ENCODE measurements at regions of chr19 and their contacts with region 1.

Region 1: DNA sequence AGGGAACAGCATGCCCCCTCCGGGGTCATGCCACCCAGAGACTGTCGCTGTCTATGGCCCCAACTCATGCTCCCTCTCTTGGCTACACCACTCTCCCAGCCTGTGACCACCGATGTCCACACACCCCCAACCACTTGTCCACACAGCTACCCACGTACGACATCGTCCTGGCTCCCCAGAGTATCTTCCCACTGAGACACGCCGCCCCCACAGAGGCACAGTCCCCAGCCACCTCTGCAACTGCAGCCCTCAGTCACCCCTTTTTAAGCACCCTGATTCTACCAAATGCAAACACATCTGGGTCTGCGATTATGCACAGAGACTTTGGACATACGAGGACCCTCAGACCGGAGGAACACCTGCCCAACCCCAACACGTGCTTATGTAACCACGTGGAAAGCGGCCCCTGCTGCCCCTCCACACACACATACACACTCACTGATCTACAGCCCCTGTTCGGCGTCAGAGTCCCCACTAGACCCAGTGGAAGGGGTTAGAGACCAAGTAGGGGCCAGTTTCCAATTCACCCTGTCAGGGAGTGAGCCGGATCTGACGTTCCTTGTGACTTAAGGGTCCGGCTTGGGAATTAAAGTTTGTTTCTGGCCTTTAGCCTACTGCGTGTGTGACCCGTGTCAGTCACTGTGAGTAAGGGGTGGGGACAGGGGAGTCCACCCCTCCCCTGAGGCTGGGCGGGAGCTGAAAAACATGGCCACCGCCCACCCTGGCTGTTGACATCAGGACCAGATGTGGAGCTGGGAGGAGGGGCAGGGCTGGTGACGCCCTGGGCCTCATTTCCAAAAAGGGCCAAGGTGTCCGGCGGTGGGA is 11.9 kb upstream of the AXL start:
- DNase-seq: no peak
- ATAC-seq: no peak
- H3K4me3 ChIP-seq: no peak overlapping the region
- H3K27ac ChIP-seq: no peak overlapping the region
- H3K4me1 ChIP-seq: no peaks in the 10 kb centered on the region
- H3K27me3 ChIP-seq: no peaks in the 10 kb centered on the region
- CTCF ChIP-seq: no peak
- POLR2A ChIP-seq: no peak
- RAD21 ChIP-seq: no peak

Region 2: DNA sequence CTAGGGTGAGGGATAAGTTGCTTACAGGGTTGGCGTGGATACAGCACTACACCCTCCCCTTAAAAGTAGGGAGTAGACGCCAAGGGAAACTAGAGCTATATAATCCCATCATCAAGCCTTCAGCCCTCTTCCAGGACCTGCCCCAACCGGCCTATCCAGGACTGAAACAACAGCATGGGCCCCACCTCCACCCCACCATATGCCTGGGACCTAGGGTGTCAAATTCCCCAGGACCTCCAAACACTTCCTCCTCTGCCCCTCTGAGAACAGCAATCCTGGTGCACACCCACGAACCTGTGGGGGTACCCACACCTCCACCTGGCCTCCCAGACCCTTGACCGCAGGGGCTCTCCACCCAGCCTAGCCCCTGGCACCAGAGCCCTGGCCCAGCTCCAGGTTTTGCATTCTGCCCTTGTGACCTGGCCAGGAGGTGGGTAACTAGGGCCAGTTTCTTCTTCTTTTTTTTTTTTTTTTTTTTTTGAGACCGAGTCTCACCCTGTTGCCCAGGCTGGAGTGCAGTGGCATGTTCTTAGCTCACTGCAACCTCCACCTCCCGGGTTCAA is 94.3 kb before region 1 on chr19:
- CTCF ChIA-PET with region 1: no interaction called
- POLR2A ChIA-PET with region 1: no interaction called
- dilution Hi-C with region 1: no loop called
- in situ Hi-C with region 1: no loop called
- intact Hi-C with region 1: no loop called
- DNase-seq: no peak
- ATAC-seq: no peak
- H3K4me3 ChIP-seq: no peak overlapping the region
- H3K27ac ChIP-seq: no peak overlapping the region
- H3K4me1 ChIP-seq: no peaks in the 10 kb centered on the region
- H3K27me3 ChIP-seq: peaks cover 5% of the 10 kb centered on the region; the same call in 1 of the 2 replicates
- CTCF ChIP-seq: no peak
- POLR2A ChIP-seq: no peak
- RAD21 ChIP-seq: no peak

Region 3: DNA sequence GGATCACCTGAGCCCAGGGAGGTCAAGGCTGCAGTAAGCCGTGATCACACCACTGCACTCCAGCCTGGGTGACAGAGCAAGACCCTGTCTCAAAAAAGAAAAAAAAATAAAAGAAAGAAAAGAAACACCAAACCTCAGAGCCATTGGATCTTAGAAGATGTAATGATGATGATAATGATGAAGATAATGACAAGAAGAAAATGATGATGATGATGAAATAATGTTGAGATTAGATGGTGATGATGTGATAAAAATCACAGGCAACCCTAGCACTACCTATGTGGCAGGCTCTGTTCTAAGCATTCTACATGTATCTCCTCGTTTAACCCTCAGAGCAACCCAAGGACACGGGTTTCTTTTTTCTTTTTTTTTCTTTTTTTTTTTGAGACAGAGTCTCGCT is 37.0 kb after region 1 on chr19:
- CTCF ChIA-PET with region 1: interaction called, 9 read pairs
- POLR2A ChIA-PET with region 1: interaction called, 13 read pairs
- dilution Hi-C with region 1: no loop called
- in situ Hi-C with region 1: no loop called
- intact Hi-C with region 1: loop called (anchors 1 kb)
- DNase-seq: no peak
- ATAC-seq: no peak
- H3K4me3 ChIP-seq: no peak overlapping the region
- H3K27ac ChIP-seq: no peak overlapping the region
- H3K4me1 ChIP-seq: no peaks in the 10 kb centered on the region
- H3K27me3 ChIP-seq: no peaks in the 10 kb centered on the region
- CTCF ChIP-seq: no peak
- POLR2A ChIP-seq: no peak
- RAD21 ChIP-seq: no peak

Region 4: DNA sequence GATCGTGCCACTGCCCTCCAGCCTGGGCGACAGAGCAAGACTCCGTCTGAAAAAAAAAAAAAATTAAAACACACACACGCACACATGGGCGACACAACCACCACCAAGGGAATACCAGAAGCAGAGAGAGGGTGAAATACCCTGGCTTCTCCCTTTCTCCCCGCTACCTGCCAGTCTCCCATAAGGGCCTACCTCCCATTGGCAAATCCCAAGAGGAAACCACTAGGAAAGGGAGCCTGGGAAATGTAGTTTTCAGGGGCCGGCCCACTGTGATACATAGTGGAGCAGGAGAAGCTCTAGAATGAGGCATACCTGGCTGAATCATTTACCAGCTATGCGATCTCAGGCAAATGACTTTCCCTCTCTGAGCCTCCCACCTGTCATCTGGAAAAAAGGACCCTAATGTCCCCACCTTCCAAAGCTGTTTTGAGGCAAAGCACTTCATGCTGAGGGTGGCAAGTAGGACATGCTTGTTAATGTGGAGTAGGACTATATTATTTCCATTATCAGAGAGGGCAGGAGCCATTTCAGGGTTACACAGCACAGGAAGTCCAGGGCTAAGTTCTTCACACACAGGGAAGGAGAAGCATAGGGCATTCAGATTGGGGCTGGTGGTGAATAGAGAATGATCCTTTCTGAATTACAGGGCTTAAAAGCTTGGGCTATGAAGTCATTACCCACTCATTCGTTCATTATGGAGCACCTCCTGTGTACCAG is 42.7 kb after region 1 on chr19:
- CTCF ChIA-PET with region 1: interaction called, 5 read pairs
- POLR2A ChIA-PET with region 1: interaction called, 13 read pairs
- dilution Hi-C with region 1: no loop called
- in situ Hi-C with region 1: no loop called
- intact Hi-C with region 1: no loop called
- DNase-seq: no peak
- ATAC-seq: no peak
- H3K4me3 ChIP-seq: no peak overlapping the region
- H3K27ac ChIP-seq: no peak overlapping the region
- H3K4me1 ChIP-seq: no peaks in the 10 kb centered on the region
- H3K27me3 ChIP-seq: no peaks in the 10 kb centered on the region
- CTCF ChIP-seq: no peak
- POLR2A ChIP-seq: peak; percentile 32; the same call in 1 of the 2 replicates
- RAD21 ChIP-seq: no peak

Region 5: GRCh38 chr19:41310033-41310758 is 103.1 kb after region 1 on chr19 and contains the start of gene CCDC97:
- CTCF ChIA-PET with region 1: interaction called, 8 read pairs
- POLR2A ChIA-PET with region 1: interaction called, 7 read pairs
- dilution Hi-C with region 1: no loop called
- in situ Hi-C with region 1: no loop called
- intact Hi-C with region 1: loop called (anchors 1 kb)
- DNase-seq: peak; percentile 85
- ATAC-seq: peak; percentile 81
- H3K4me3 ChIP-seq: peak within 1 kb of the TSS; percentile 72
- H3K27ac ChIP-seq: peak within 1 kb of the TSS; percentile 96
- H3K4me1 ChIP-seq: peaks cover 7% of the 10 kb centered on the region
- H3K27me3 ChIP-seq: no peaks in the 10 kb centered on the region
- CTCF ChIP-seq: no peak
- POLR2A ChIP-seq: peak; percentile 82
- RAD21 ChIP-seq: no peak
- total RNA-seq, gene CCDC97: 4.1 and 5.8 TPM in 2 replicates

Region 6: GRCh38 chr19:41353466-41354342 is 146.6 kb after region 1 on chr19 and contains the start of gene TGFB1:
- CTCF ChIA-PET with region 1: no interaction called
- POLR2A ChIA-PET with region 1: no interaction called
- dilution Hi-C with region 1: no loop called
- in situ Hi-C with region 1: no loop called
- intact Hi-C with region 1: loop called (anchors 1 kb)
- DNase-seq: peak; percentile 87
- ATAC-seq: peak; percentile 78
- H3K4me3 ChIP-seq: peak within 1 kb of the TSS; percentile 76
- H3K27ac ChIP-seq: peak within 1 kb of the TSS; percentile 73
- H3K4me1 ChIP-seq: no peaks in the 10 kb centered on the region
- H3K27me3 ChIP-seq: no peaks in the 10 kb centered on the region
- CTCF ChIP-seq: peak; percentile 89
- POLR2A ChIP-seq: peak; percentile 85
- RAD21 ChIP-seq: peak; percentile 52
- total RNA-seq, gene TGFB1: 3.2 and 3.9 TPM in 2 replicates

Region 7: GRCh38 chr19:41426952-41427646 is 220.0 kb after region 1 on chr19 and contains the start of gene B3GNT8:
- CTCF ChIA-PET with region 1: no interaction called
- POLR2A ChIA-PET with region 1: no interaction called
- dilution Hi-C with region 1: no loop called
- in situ Hi-C with region 1: no loop called
- intact Hi-C with region 1: loop called (anchors 10 kb)
- DNase-seq: peak; percentile 34
- ATAC-seq: peak; percentile 93
- H3K4me3 ChIP-seq: peak within 1 kb of the TSS; percentile 27
- H3K27ac ChIP-seq: peak within 1 kb of the TSS; percentile 3; the same call in 1 of the 2 replicates
- H3K4me1 ChIP-seq: peaks cover 10% of the 10 kb centered on the region; the same call in 1 of the 2 replicates
- H3K27me3 ChIP-seq: no peaks in the 10 kb centered on the region
- CTCF ChIP-seq: no peak
- POLR2A ChIP-seq: no peak
- RAD21 ChIP-seq: no peak
- total RNA-seq, gene B3GNT8: under 0.01 and 0.36 TPM in 2 replicates

Region 8: GRCh38 chr19:41449079-41449864 is 242.1 kb after region 1 on chr19:
- CTCF ChIA-PET with region 1: no interaction called
- POLR2A ChIA-PET with region 1: no interaction called
- dilution Hi-C with region 1: no loop called
- in situ Hi-C with region 1: no loop called
- intact Hi-C with region 1: no loop called
- DNase-seq: peak; percentile 61
- ATAC-seq: peak; percentile 100
- H3K4me3 ChIP-seq: peak overlapping the region; percentile 31; the same call in 1 of the 2 replicates
- H3K27ac ChIP-seq: no peak overlapping the region
- H3K4me1 ChIP-seq: no peaks in the 10 kb centered on the region
- H3K27me3 ChIP-seq: peaks cover 3% of the 10 kb centered on the region
- CTCF ChIP-seq: peak; percentile 95
- POLR2A ChIP-seq: no peak
- RAD21 ChIP-seq: peak; percentile 88

Measured in IMR-90 (cell line).